MCF 10A (cell line): ENCODE measurements at regions of chr17 and their contacts with region 1.

Region 1: GRCh38 chr17:3845621-3846441 is at the start of gene NCBP3:
- DNase-seq: peak; percentile 93
- H3K4me3 Mint-ChIP-seq: peak within 1 kb of the TSS; percentile 80
- H3K27ac Mint-ChIP-seq: peak within 1 kb of the TSS; percentile 86
- H3K4me1 Mint-ChIP-seq: peaks cover 14% of the 10 kb centered on the region
- H3K27me3 Mint-ChIP-seq: no peaks in the 10 kb centered on the region
- CTCF ChIP-seq: peak; percentile 74
- total RNA-seq, gene NCBP3: 47.1 and 52.5 TPM in 2 replicates

Region 2: DNA sequence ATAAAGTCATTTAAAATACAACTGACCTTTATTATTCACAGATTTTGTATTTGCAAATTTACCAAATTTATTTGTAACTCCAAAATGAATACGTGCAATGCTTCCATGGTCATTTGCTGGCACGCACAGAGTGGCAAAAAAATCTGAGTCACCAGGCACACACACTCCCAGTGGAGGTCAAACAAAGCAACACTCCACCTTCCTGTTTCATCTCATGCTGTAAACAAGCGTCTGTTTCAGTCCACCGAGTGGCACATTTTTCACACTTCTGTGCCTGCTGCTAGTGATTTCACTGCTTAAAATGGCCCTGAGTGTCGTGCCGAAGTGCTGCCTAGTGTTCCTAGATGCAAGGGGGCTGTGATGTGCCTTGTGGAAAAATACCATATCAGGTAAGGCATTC is 27.0 kb before region 1 on chr17:
- CTCF ChIA-PET with region 1: interaction called, 10 read pairs
- POLR2A ChIA-PET with region 1: interaction called, 3 read pairs
- intact Hi-C with region 1: no loop called
- DNase-seq: no peak
- H3K4me3 Mint-ChIP-seq: no peak overlapping the region
- H3K27ac Mint-ChIP-seq: no peak overlapping the region
- H3K4me1 Mint-ChIP-seq: no peaks in the 10 kb centered on the region
- H3K27me3 Mint-ChIP-seq: no peaks in the 10 kb centered on the region
- CTCF ChIP-seq: no peak

Region 3: DNA sequence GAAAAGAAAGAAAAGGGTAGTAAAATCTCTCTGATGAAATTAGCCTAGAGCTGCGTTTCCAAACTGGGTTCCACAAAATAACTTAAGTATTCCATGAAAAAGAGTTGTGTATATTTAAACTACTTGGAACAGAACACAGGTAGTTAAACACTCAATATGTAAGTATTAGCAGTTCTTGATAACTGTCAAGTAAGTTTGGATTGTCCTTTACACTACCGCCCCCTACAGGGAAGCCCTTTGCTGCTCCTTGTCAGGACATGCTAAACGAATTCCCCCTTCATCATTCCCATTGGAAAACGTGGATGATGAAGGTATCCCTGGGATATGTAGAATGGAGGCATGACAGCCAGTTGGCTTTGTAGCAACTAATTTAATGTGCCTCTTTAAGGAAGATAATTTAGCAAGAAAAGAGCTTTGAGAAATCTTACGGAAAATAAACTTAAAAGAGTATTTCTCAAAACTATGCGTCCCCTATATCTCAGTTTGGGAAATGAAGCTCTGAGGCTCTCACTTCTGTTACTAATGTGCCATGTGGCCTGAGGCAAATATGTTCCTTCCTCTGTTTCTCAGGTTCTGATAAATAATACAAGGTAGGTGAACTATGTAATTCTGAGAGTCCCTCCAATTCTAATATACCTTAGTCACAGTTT is 18.6 kb before region 1 on chr17:
- CTCF ChIA-PET with region 1: interaction called, 42 read pairs
- POLR2A ChIA-PET with region 1: interaction called, 4 read pairs
- intact Hi-C with region 1: no loop called
- DNase-seq: peak; percentile 76
- H3K4me3 Mint-ChIP-seq: no peak overlapping the region
- H3K27ac Mint-ChIP-seq: no peak overlapping the region
- H3K4me1 Mint-ChIP-seq: no peaks in the 10 kb centered on the region
- H3K27me3 Mint-ChIP-seq: no peaks in the 10 kb centered on the region
- CTCF ChIP-seq: peak; percentile 64

Region 4: GRCh38 chr17:3859940-3860339 is 14.1 kb after region 1 on chr17:
- CTCF ChIA-PET with region 1: interaction called, 10 read pairs
- POLR2A ChIA-PET with region 1: interaction called, 4 read pairs
- intact Hi-C with region 1: no loop called
- DNase-seq: no peak
- H3K4me3 Mint-ChIP-seq: no peak overlapping the region
- H3K27ac Mint-ChIP-seq: no peak overlapping the region
- H3K4me1 Mint-ChIP-seq: no peaks in the 10 kb centered on the region
- H3K27me3 Mint-ChIP-seq: no peaks in the 10 kb centered on the region
- CTCF ChIP-seq: no peak

Region 5: GRCh38 chr17:3893003-3893719 is 47.3 kb after region 1 on chr17 and contains the start of gene CAMKK1:
- CTCF ChIA-PET with region 1: interaction called, 4 read pairs
- POLR2A ChIA-PET with region 1: interaction called, 10 read pairs
- intact Hi-C with region 1: no loop called
- DNase-seq: peak; percentile 83
- H3K4me3 Mint-ChIP-seq: peak within 1 kb of the TSS; percentile 72
- H3K27ac Mint-ChIP-seq: no peak within 1 kb of the TSS
- H3K4me1 Mint-ChIP-seq: peaks cover 38% of the 10 kb centered on the region
- H3K27me3 Mint-ChIP-seq: no peaks in the 10 kb centered on the region
- CTCF ChIP-seq: no peak
- total RNA-seq, gene CAMKK1: 3.8 and 4.3 TPM in 2 replicates

Region 6: GRCh38 chr17:3907483-3908216 is 61.8 kb after region 1 on chr17:
- CTCF ChIA-PET with region 1: interaction called, 14 read pairs
- POLR2A ChIA-PET with region 1: no interaction called
- intact Hi-C with region 1: loop called (anchors 5 kb)
- DNase-seq: peak; percentile 38
- H3K4me3 Mint-ChIP-seq: no peak overlapping the region
- H3K27ac Mint-ChIP-seq: no peak overlapping the region
- H3K4me1 Mint-ChIP-seq: no peaks in the 10 kb centered on the region
- H3K27me3 Mint-ChIP-seq: no peaks in the 10 kb centered on the region
- CTCF ChIP-seq: peak; percentile 28

Region 7: GRCh38 chr17:3913531-3914311 is 67.9 kb after region 1 on chr17:
- CTCF ChIA-PET with region 1: interaction called, 14 read pairs
- POLR2A ChIA-PET with region 1: no interaction called
- intact Hi-C with region 1: loop called (anchors 5 kb)
- DNase-seq: peak; percentile 65
- H3K4me3 Mint-ChIP-seq: no peak overlapping the region
- H3K27ac Mint-ChIP-seq: no peak overlapping the region
- H3K4me1 Mint-ChIP-seq: no peaks in the 10 kb centered on the region
- H3K27me3 Mint-ChIP-seq: no peaks in the 10 kb centered on the region
- CTCF ChIP-seq: peak; percentile 88